A673 (cell line): ENCODE measurements at regions of chr1 and their contacts with region 1.

Region 1: DNA sequence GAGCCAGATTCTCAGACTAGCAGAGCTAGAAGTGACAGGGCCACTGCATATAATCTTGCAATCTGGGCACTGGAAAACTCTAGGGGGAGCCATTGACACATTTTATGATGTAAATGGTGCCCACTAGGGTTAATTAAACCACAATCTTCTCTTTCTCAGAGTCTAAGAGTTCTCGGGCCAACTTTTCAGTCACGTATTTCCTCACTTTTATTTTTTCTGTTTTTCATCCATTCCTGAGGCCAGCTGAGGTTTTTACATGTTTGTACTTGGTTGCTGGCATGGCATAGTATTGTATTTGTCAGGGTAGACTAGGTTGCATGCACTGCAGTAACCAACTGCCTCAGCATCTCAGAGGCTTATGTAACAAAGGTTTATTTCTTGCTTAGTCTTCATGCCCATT is 138.2 kb downstream of the ZNF326 start:
- DNase-seq: peak; percentile 93
- H3K4me3 ChIP-seq: no peak overlapping the region
- H3K27ac ChIP-seq: peak overlapping the region; percentile 15
- H3K4me1 ChIP-seq: peaks cover 48% of the 10 kb centered on the region
- H3K27me3 ChIP-seq: no peaks in the 10 kb centered on the region
- CTCF ChIP-seq: peak; percentile 86

Region 2: GRCh38 chr1:90067194-90067931 is 65.8 kb before region 1 on chr1:
- CTCF ChIA-PET with region 1: no interaction called
- POLR2A ChIA-PET with region 1: no interaction called
- intact Hi-C with region 1: loop called (anchors 5 kb)
- DNase-seq: peak; percentile 96
- H3K4me3 ChIP-seq: no peak overlapping the region
- H3K27ac ChIP-seq: peak overlapping the region; percentile 95
- H3K4me1 ChIP-seq: peaks cover 55% of the 10 kb centered on the region
- H3K27me3 ChIP-seq: no peaks in the 10 kb centered on the region
- CTCF ChIP-seq: no peak

Region 3: DNA sequence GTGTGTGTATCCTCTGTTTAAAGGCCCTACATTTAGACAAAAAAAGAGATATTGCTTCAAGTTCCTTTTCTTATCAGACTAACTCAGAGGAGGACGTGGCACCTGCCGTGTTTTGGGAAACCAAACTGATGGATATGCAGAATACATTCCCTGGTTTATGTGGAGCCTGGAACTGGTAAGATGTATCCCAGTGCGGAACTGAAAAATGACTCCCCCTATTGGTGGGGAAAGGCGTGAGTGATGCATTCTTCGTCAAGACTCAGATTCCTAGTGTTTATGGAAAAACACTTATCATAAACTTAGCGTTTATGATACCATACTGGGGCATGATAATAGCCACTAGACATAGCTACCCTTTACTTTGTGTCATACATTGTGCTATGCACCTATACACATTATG is 16.0 kb after region 1 on chr1:
- CTCF ChIA-PET with region 1: no interaction called
- POLR2A ChIA-PET with region 1: no interaction called
- intact Hi-C with region 1: no loop called
- DNase-seq: no peak
- H3K4me3 ChIP-seq: no peak overlapping the region
- H3K27ac ChIP-seq: no peak overlapping the region
- H3K4me1 ChIP-seq: peaks cover 13% of the 10 kb centered on the region
- H3K27me3 ChIP-seq: no peaks in the 10 kb centered on the region
- CTCF ChIP-seq: peak; percentile 47

Region 4: GRCh38 chr1:90475631-90476030 is 342.5 kb after region 1 on chr1:
- CTCF ChIA-PET with region 1: no interaction called
- POLR2A ChIA-PET with region 1: no interaction called
- intact Hi-C with region 1: loop called (anchors 10 kb)
- DNase-seq: peak; percentile 68
- H3K4me3 ChIP-seq: no peak overlapping the region
- H3K27ac ChIP-seq: no peak overlapping the region
- H3K4me1 ChIP-seq: no peaks in the 10 kb centered on the region
- H3K27me3 ChIP-seq: no peaks in the 10 kb centered on the region
- CTCF ChIP-seq: peak; percentile 73

Region 5: DNA sequence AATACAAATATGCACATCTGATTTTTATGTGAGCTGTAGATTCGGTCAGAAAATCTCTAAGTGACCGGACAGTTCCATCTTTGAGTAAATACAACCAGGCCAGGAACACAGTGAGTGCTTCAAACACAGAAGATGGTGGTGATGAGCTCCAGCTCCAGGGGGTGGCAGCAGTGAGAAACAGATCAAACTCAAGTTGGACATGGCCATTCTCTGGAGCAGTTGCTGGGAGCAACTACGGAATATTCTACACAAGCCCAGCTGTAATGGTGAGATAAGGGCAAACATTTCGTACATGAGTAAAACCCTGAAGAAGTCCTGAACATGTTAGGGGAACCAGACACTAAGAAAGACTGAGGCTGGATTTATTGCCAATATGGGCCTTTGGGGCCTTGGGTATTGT is 483.3 kb after region 1 on chr1:
- CTCF ChIA-PET with region 1: no interaction called
- POLR2A ChIA-PET with region 1: no interaction called
- intact Hi-C with region 1: loop called (anchors 5 kb)
- DNase-seq: peak; percentile 73
- H3K4me3 ChIP-seq: no peak overlapping the region
- H3K27ac ChIP-seq: no peak overlapping the region
- H3K4me1 ChIP-seq: peaks cover 32% of the 10 kb centered on the region
- H3K27me3 ChIP-seq: no peaks in the 10 kb centered on the region
- CTCF ChIP-seq: peak; percentile 70

Region 6: GRCh38 chr1:90721210-90722194 is 588.4 kb after region 1 on chr1:
- CTCF ChIA-PET with region 1: interaction called, 6 read pairs
- POLR2A ChIA-PET with region 1: no interaction called
- intact Hi-C with region 1: loop called (anchors 5 kb)
- DNase-seq: peak; percentile 96
- H3K4me3 ChIP-seq: peak overlapping the region; percentile 75
- H3K27ac ChIP-seq: peak overlapping the region; percentile 88
- H3K4me1 ChIP-seq: peaks cover 24% of the 10 kb centered on the region
- H3K27me3 ChIP-seq: no peaks in the 10 kb centered on the region
- CTCF ChIP-seq: peak; percentile 96